Activated naive CD4-positive, alpha-beta T cell treated with anti-CD3 and anti-CD28 coated beads for 36 hours (primary cell): ENCODE measurements at regions of chr2 and their contacts with region 1.

Region 1: GRCh38 chr2:54522624-54523281 is 66.6 kb downstream of the SPTBN1 start:
- DNase-seq: peak; percentile 73
- H3K4me3 Mint-ChIP-seq: no peak overlapping the region
- H3K27ac Mint-ChIP-seq: no peak overlapping the region
- H3K4me1 Mint-ChIP-seq: peaks cover 15% of the 10 kb centered on the region
- H3K27me3 Mint-ChIP-seq: no peaks in the 10 kb centered on the region

Region 2: DNA sequence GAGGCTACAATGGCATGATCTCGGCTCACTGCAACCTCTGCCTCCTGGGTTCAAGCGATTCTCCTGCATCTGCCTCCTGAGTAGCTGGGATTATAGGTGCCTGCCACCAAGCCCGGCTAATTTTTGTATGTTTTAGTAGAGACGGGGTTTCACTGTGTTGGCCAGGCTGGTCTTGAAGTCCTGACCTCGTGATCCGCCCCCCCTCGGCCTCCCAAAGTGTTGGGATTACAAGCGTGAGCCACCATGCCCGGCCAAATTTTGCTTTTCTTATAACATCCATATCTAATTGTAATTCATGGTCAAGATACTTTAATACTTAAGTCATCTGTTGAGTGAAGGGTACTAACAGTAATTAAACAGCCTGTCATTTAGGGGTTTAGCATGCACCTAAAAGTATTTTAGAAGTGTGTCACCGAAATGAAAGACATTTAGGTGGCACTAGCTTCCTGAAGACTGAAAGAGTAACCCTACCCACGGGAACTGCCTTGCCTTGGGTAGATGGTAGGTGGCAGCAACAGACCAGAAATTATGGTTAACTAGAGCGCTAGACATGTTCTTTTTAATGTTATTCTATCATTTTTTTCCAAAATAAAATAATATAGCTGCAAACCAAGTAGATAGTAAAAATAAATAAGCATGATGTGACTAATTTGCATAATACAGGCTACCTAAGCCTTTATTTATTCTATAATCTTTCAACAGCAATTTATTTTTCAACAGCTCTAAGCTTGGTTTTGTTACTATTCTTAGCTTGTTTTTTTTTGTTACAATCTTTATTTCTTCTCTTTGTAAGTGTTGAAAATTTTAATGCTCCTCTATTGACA is 415.9 kb before region 1 on chr2:
- CTCF ChIA-PET with region 1: interaction called, 3 read pairs
- intact Hi-C with region 1: loop called (anchors 2 kb)
- DNase-seq: peak; percentile 71
- H3K4me3 Mint-ChIP-seq: no peak overlapping the region
- H3K27ac Mint-ChIP-seq: no peak overlapping the region
- H3K4me1 Mint-ChIP-seq: peaks cover 7% of the 10 kb centered on the region
- H3K27me3 Mint-ChIP-seq: no peaks in the 10 kb centered on the region

Region 3: DNA sequence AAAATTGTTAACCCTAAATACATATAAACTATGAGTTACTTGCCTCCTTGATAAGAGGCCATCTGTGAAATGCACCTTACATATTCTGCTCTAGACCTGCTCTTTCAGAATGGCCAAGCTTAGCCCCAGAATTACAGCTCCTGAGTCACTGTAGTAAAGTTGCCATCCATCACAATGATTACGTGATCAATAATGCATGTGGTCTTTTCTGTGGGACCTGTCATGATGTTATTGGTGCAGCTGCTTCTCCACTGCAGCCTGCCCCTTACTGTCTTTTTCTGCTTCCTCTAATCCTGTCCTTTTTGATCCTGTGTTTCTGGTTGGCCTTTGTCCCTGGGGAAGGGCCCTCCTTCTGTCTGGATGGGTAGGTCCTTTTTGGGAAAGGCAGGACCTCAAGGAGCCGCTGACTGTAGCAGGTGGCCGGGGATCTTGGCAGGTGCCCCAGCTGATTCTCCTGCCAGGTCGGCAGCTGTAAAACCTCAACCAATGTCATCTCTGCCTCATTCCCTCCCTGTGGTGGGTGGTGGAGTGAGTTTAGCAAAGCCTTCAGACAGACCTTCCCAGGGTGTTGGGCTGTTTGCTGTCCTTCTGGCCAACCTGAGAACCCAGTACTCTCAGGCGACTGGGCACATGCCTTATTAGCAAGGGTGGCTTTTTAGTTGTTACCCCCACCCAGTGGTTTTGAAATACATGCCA is 74.5 kb after region 1 on chr2:
- CTCF ChIA-PET with region 1: interaction called, 4 read pairs
- intact Hi-C with region 1: loop called (anchors 2 kb)
- DNase-seq: peak; percentile 62
- H3K4me3 Mint-ChIP-seq: peak overlapping the region; percentile 75
- H3K27ac Mint-ChIP-seq: peak overlapping the region; percentile 96
- H3K4me1 Mint-ChIP-seq: peaks cover 92% of the 10 kb centered on the region
- H3K27me3 Mint-ChIP-seq: no peaks in the 10 kb centered on the region

Region 4: GRCh38 chr2:54657664-54658083 is 134.9 kb after region 1 on chr2:
- CTCF ChIA-PET with region 1: interaction called, 19 read pairs
- intact Hi-C with region 1: loop called (anchors 2 kb)
- DNase-seq: peak; percentile 58
- H3K4me3 Mint-ChIP-seq: no peak overlapping the region
- H3K27ac Mint-ChIP-seq: peak overlapping the region; percentile 60
- H3K4me1 Mint-ChIP-seq: peaks cover 18% of the 10 kb centered on the region
- H3K27me3 Mint-ChIP-seq: no peaks in the 10 kb centered on the region

Region 5: DNA sequence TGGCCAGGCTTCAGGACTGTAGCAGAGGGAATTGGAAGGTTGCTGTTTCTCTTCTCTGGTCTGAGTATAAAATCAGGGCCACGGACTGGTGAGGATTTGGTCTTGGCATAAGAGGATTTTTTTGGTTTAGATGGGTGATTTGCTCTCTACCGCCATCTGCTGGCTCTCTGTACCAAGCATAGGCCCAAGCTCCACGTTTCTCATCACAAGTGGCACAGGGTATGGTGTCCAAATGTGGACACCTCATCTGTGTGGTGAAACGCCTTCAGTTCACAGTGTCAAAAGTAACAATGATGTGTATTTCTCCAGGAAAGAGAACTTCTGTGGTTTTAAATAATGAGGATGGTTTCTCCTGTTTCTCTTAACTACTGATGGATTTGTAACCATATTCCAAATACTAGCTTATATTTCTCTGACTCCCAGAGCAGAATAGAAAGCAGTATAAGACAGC is 315.9 kb after region 1 on chr2:
- CTCF ChIA-PET with region 1: interaction called, 22 read pairs
- intact Hi-C with region 1: loop called (anchors 1 kb)
- DNase-seq: peak; percentile 80
- H3K4me3 Mint-ChIP-seq: no peak overlapping the region
- H3K27ac Mint-ChIP-seq: no peak overlapping the region
- H3K4me1 Mint-ChIP-seq: no peaks in the 10 kb centered on the region
- H3K27me3 Mint-ChIP-seq: no peaks in the 10 kb centered on the region

Region 6: GRCh38 chr2:54945391-54946219 is 422.9 kb after region 1 on chr2:
- CTCF ChIA-PET with region 1: no interaction called
- intact Hi-C with region 1: no loop called
- DNase-seq: peak; percentile 38
- H3K4me3 Mint-ChIP-seq: no peak overlapping the region
- H3K27ac Mint-ChIP-seq: no peak overlapping the region
- H3K4me1 Mint-ChIP-seq: peaks cover 4% of the 10 kb centered on the region
- H3K27me3 Mint-ChIP-seq: peaks cover 4% of the 10 kb centered on the region

Region 7: GRCh38 chr2:55010149-55010591 is 487.4 kb after region 1 on chr2:
- CTCF ChIA-PET with region 1: no interaction called
- intact Hi-C with region 1: loop called (anchors 5 kb)
- DNase-seq: peak; percentile 54
- H3K4me3 Mint-ChIP-seq: peak overlapping the region; percentile 77
- H3K27ac Mint-ChIP-seq: peak overlapping the region; percentile 55
- H3K4me1 Mint-ChIP-seq: peaks cover 56% of the 10 kb centered on the region
- H3K27me3 Mint-ChIP-seq: no peaks in the 10 kb centered on the region